Vagina (tissue), 2 donors: ENCODE measurements at regions of chr11 and their contacts with region 1.

Region 1: GRCh38 chr11:125404776-125405435 is 91.2 kb downstream of the FEZ1 start:
- DNase-seq: no peak
- H3K4me3 ChIP-seq: no peak overlapping the region
- H3K27ac ChIP-seq: no peak overlapping the region
- H3K4me1 ChIP-seq: peaks cover 8% of the 10 kb centered on the region
- H3K27me3 ChIP-seq: no peaks in the 10 kb centered on the region
- CTCF ChIP-seq: peak; percentile 70 to 88 (median 75)
- POLR2A ChIP-seq: no peak

Region 2: GRCh38 chr11:125082611-125083311 is 322.1 kb before region 1 on chr11:
- intact Hi-C with region 1: loop called (anchors 10 kb)
- DNase-seq: peak; percentile 81 to 95
- H3K4me3 ChIP-seq: no peak overlapping the region
- H3K27ac ChIP-seq: peak overlapping the region; percentile 17
- H3K4me1 ChIP-seq: peaks cover 20% of the 10 kb centered on the region
- H3K27me3 ChIP-seq: no peaks in the 10 kb centered on the region
- CTCF ChIP-seq: no peak
- POLR2A ChIP-seq: no peak